CD14-positive monocyte (primary cell): ENCODE measurements at regions of chr19 and their contacts with region 1.

Region 1: DNA sequence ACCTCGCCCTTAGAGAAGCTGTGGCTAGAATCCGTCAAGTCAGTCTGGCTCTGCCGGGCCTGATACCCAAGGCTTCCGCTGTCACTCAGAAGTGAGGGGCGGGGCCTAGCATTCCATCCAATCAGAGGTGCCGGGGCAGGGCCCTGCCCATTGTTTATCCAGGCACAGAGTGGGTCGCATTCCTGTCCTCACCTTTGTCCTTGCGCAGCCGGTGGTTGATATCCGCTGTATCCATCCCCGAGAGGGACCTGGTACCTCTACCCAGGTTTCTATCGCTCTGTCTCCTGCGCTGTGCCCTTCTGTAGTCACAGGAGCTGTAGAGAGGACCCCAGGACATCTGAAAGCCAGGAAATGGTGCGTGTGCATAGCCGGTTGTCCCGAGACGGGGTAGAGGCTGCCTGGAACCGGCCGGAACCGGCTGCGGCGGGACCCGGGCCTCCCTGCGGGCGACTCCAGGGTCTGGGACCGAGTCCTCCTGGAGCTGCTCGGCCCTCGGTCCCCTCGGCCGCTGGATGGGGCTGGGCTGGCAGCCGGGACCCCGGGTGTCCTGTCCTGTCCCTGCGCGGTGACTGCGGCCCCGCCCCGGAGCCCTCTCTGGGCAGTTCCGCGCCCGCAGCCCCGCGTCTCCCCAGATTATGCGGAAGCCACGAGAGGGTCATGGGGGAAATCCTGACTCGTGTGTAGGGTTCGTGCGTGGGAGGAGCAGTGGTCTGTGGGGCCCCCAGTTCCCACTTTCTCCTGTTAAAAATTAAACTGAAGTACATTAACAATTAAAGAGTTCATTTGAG is at the start of gene ZNF763:
- DNase-seq: peak; percentile 87 to 95 (median 93)
- H3K4me3 ChIP-seq: peak within 1 kb of the TSS; percentile 68 to 99 (median 96)
- H3K4me3 Mint-ChIP-seq: peak within 1 kb of the TSS; percentile 94 to 99
- H3K27ac ChIP-seq: peak within 1 kb of the TSS; percentile 86 to 99
- H3K27ac Mint-ChIP-seq: peak within 1 kb of the TSS; percentile 93 to 99 (median 97)
- H3K4me1 ChIP-seq: peaks cover 18 to 21% of the 10 kb centered on the region in 2 donors
- H3K4me1 Mint-ChIP-seq: peaks cover 25% of the 10 kb centered on the region
- H3K27me3 ChIP-seq: no peaks in the 10 kb centered on the region
- H3K27me3 Mint-ChIP-seq: peaks cover 0 to 6% (median 2%) of the 10 kb centered on the region in 3 donors
- CTCF ChIP-seq: no peak
- polyA plus RNA-seq, gene ZNF763: 1.3 to 2.6 (median 1.7) TPM

Region 2: DNA sequence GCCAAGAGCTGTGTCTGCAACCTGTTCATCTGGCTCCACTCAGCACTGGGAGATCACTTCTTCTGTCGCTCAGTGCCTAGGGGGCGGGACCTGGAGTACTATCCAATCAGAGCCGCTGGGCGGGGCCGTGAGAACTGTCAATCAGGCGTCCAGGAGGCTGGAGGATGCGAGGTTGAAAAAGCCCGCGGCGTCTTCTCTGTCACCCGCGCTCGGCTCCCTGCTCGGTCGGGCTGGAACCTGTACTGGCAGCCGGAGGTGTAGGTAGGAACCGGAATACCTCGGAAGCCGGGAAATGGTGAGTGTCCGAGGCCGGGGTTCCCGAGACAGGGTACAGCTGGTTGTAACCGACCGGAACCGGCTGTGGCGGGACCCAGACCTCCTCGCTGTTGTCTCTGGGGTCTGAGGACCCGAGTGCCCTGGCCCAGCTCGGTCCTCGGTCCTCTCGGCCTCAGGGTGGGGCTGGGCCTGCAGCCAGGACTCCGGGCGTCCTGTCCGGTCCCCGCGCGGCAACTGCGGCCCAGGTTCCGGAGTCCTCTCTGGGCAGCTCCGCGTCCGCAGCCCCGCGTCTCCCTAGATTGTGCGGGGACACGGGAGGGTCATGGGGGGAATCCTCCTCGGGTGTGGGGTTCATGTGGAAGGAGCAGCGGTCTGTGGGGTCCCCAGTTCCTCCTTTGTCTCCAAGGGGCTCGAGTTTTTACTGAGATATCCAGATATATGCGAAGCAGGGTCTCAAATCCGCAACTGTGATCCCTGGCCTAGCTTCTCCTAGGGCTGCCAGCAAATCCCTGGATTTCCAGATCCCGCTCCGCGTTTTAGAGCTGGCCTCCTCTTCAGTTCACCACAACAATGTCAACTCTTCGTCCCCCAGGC is 325.2 kb before region 1 on chr19:
- intact Hi-C with region 1: no loop called
- DNase-seq: peak; percentile 81 to 90 (median 82)
- H3K4me3 ChIP-seq: peak overlapping the region; percentile 60 to 86 (median 61)
- H3K4me3 Mint-ChIP-seq: peak overlapping the region; percentile 78 to 87
- H3K27ac ChIP-seq: no peak overlapping the region
- H3K27ac Mint-ChIP-seq: peak overlapping the region in 2 of 7 donors; percentile 37 to 73
- H3K4me1 ChIP-seq: peaks cover 7 to 12% of the 10 kb centered on the region in 2 donors
- H3K4me1 Mint-ChIP-seq: peaks cover 4% of the 10 kb centered on the region
- H3K27me3 ChIP-seq: no peaks in the 10 kb centered on the region
- H3K27me3 Mint-ChIP-seq: peaks cover 3 to 9% (median 8%) of the 10 kb centered on the region in 3 donors
- CTCF ChIP-seq: no peak

Region 3: GRCh38 chr19:11924886-11925650 is 40.0 kb before region 1 on chr19 and contains the start of gene ZNF700:
- intact Hi-C with region 1: loop called (anchors 2 to 5 kb)
- DNase-seq: peak; percentile 81 to 86 (median 81)
- H3K4me3 ChIP-seq: peak within 1 kb of the TSS; percentile 83 to 97 (median 91)
- H3K4me3 Mint-ChIP-seq: peak within 1 kb of the TSS; percentile 95 to 96
- H3K27ac ChIP-seq: peak within 1 kb of the TSS; percentile 93 to 95
- H3K27ac Mint-ChIP-seq: peak within 1 kb of the TSS; percentile 91 to 99 (median 97)
- H3K4me1 ChIP-seq: peaks cover 26 to 37% of the 10 kb centered on the region in 2 donors
- H3K4me1 Mint-ChIP-seq: peaks cover 30% of the 10 kb centered on the region
- H3K27me3 ChIP-seq: no peaks in the 10 kb centered on the region
- H3K27me3 Mint-ChIP-seq: no peaks in the 10 kb centered on the region
- CTCF ChIP-seq: no peak
- polyA plus RNA-seq, gene ZNF700: 1.1 to 18.3 (median 1.2) TPM

Region 4: GRCh38 chr19:12035220-12036153 is 70.4 kb after region 1 on chr19 and contains the start of gene ZNF433:
- intact Hi-C with region 1: loop called in 1 of 2 experiments (anchors 2 kb)
- DNase-seq: peak; percentile 56 to 72 (median 56)
- H3K4me3 ChIP-seq: peak within 1 kb of the TSS; percentile 58 to 86 (median 61)
- H3K4me3 Mint-ChIP-seq: peak within 1 kb of the TSS; percentile 88 to 94
- H3K27ac ChIP-seq: peak within 1 kb of the TSS in 1 of 2 donors; percentile 51
- H3K27ac Mint-ChIP-seq: peak within 1 kb of the TSS in 4 of 7 donors; percentile 16 to 81 (median 65)
- H3K4me1 ChIP-seq: peaks cover 11 to 13% of the 10 kb centered on the region in 2 donors
- H3K4me1 Mint-ChIP-seq: peaks cover 18% of the 10 kb centered on the region
- H3K27me3 ChIP-seq: peaks cover 0 to 4% of the 10 kb centered on the region in 2 donors
- H3K27me3 Mint-ChIP-seq: peaks cover 0 to 8% (median 5%) of the 10 kb centered on the region in 3 donors
- CTCF ChIP-seq: no peak
- polyA plus RNA-seq, gene ZNF433: 0.50 to 1.1 (median 0.76) TPM

Region 5: GRCh38 chr19:12064590-12065538 is 99.8 kb after region 1 on chr19 and contains the start of gene ZNF844:
- intact Hi-C with region 1: loop called in 1 of 2 experiments (anchors 5 kb)
- DNase-seq: peak; percentile 86 to 88 (median 86)
- H3K4me3 ChIP-seq: peak within 1 kb of the TSS; percentile 62 to 91 (median 63)
- H3K4me3 Mint-ChIP-seq: peak within 1 kb of the TSS; percentile 88 to 94
- H3K27ac ChIP-seq: peak within 1 kb of the TSS; percentile 54 to 90
- H3K27ac Mint-ChIP-seq: peak within 1 kb of the TSS; percentile 63 to 94 (median 89)
- H3K4me1 ChIP-seq: peaks cover 9 to 21% of the 10 kb centered on the region in 2 donors
- H3K4me1 Mint-ChIP-seq: peaks cover 14% of the 10 kb centered on the region
- H3K27me3 ChIP-seq: no peaks in the 10 kb centered on the region
- H3K27me3 Mint-ChIP-seq: peaks cover 0 to 6% (median 1%) of the 10 kb centered on the region in 3 donors
- CTCF ChIP-seq: no peak
- polyA plus RNA-seq, gene ZNF844: 1.9 to 2.2 (median 2.0) TPM